ENCODE measurements at regions of chr21 and their contacts with region 1.

Region 1: GRCh38 chr21:32257962-32258785 is 20.7 kb downstream of the MIS18A start:
- DNase-seq: peak; percentile 81
- H3K4me3 ChIP-seq: peak overlapping the region in 1 of 2 experiments; percentile 36; a peak in 1 of 4 replicates
- H3K27ac ChIP-seq: peak overlapping the region; percentile 79 to 92; a peak in 3 of 4 replicates
- H3K4me1 ChIP-seq: peaks cover 11 to 27% of the 10 kb centered on the region in 2 experiments
- H3K27me3 ChIP-seq: no peaks in the 10 kb centered on the region
- CTCF ChIP-seq: peak; percentile 87
- EP300 ChIP-seq: 0 out of 4 replicates have a peak, but pooled peaks of 1 of the 2 experiments have one; percentile 11
- RAD21 ChIP-seq: peak; percentile 98

Region 2: GRCh38 chr21:31786164-31786920 is 471.8 kb before region 1 on chr21:
- CTCF ChIA-PET with region 1: interaction called, 46 read pairs
- POLR2A ChIA-PET with region 1: no interaction called
- DNase-seq: no peak
- H3K4me3 ChIP-seq: peak overlapping the region in 1 of 2 experiments; percentile 32; a peak in 1 of 4 replicates
- H3K27ac ChIP-seq: no peak overlapping the region
- H3K4me1 ChIP-seq: no peaks in the 10 kb centered on the region; a peak in 1 of 4 replicates
- H3K27me3 ChIP-seq: no peaks in the 10 kb centered on the region
- CTCF ChIP-seq: no peak; the same call in 1 of the 2 replicates
- EP300 ChIP-seq: no peak
- RAD21 ChIP-seq: no peak

Region 3: GRCh38 chr21:31873696-31874599 is 384.2 kb before region 1 on chr21:
- CTCF ChIA-PET with region 1: interaction called, 75 read pairs
- POLR2A ChIA-PET with region 1: interaction called, 8 read pairs
- DNase-seq: peak; percentile 91
- H3K4me3 ChIP-seq: peak overlapping the region; percentile 55 to 75; a peak in 3 of 4 replicates
- H3K27ac ChIP-seq: peak overlapping the region in 1 of 2 experiments; percentile 34; a peak in 1 of 4 replicates
- H3K4me1 ChIP-seq: peaks cover 0 to 20% of the 10 kb centered on the region in 2 experiments; a peak in 1 of 4 replicates
- H3K27me3 ChIP-seq: peaks cover 5% of the 10 kb centered on the region
- CTCF ChIP-seq: peak; percentile 61
- EP300 ChIP-seq: no peak
- RAD21 ChIP-seq: peak; percentile 39; the same call in 1 of the 2 replicates

Region 4: GRCh38 chr21:31938330-31939300 is 319.6 kb before region 1 on chr21:
- CTCF ChIA-PET with region 1: interaction called, 15 read pairs
- POLR2A ChIA-PET with region 1: no interaction called
- DNase-seq: peak; percentile 65
- H3K4me3 ChIP-seq: no peak overlapping the region
- H3K27ac ChIP-seq: 0 out of 4 replicates have a peak overlapping the region, but pooled peaks of 1 of the 2 experiments have one; percentile 5
- H3K4me1 ChIP-seq: peaks cover 0 to 13% of the 10 kb centered on the region in 2 experiments; a peak in 2 of 4 replicates
- H3K27me3 ChIP-seq: no peaks in the 10 kb centered on the region
- CTCF ChIP-seq: no peak
- EP300 ChIP-seq: no peak
- RAD21 ChIP-seq: no peak

Region 5: DNA sequence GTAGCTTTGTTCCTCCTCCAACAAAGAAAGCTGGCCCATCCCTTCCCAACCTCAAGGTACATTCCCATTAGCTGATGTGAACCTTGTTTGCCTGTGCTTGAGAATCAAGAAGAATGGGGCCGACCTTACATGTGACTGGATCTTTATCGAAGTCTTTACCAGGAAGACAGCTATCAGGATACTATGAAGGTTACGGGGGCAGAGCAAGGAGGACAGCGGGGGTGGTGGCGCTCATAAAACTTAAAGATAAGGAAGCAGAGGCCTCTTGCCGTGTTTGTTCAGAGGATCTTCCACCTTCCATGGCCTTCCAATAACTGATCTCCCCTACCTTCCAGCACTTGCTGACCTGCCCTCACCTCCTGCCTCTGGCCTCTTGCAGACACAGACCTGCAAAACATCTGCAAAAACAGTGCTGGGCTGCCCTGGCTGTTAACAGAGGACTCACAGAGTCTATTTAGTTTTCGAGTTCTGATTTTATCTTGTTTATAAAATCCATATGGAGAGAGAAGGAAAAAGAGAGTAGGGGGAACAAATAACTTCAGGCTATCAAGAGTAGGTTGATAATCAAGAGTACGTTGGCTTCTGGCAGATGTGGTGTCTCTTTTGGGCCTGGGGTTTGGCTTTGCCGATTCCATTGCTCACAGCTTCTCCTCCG is 187.4 kb before region 1 on chr21:
- CTCF ChIA-PET with region 1: interaction called, 17 read pairs
- POLR2A ChIA-PET with region 1: no interaction called
- DNase-seq: peak; percentile 77
- H3K4me3 ChIP-seq: no peak overlapping the region
- H3K27ac ChIP-seq: peak overlapping the region in 1 of 2 experiments; percentile 95; a peak in 2 of 4 replicates
- H3K4me1 ChIP-seq: peaks cover 0 to 17% of the 10 kb centered on the region in 2 experiments; a peak in 2 of 4 replicates
- H3K27me3 ChIP-seq: no peaks in the 10 kb centered on the region
- CTCF ChIP-seq: no peak
- EP300 ChIP-seq: peak in 1 of 2 experiments; percentile 94; a peak in 2 of 4 replicates
- RAD21 ChIP-seq: peak; percentile 20; the same call in 1 of the 2 replicates

Region 6: DNA sequence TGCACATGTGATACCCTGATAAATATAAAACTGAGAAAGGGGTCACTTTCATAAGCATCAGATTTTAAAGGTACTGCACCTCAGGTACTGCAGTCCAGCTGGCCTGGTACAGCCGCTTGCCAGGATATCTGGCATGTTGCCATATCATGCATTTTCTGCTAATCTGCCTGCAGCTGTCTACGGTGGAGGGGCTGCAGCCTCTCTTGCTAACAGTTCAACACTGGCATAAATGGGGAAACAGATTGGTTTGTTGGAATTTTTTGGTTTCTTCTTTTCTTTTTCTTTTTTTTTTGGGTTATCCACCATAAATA is 50.8 kb before region 1 on chr21:
- CTCF ChIA-PET with region 1: interaction called, 18 read pairs
- POLR2A ChIA-PET with region 1: no interaction called
- DNase-seq: peak; percentile 76
- H3K4me3 ChIP-seq: no peak overlapping the region
- H3K27ac ChIP-seq: peak overlapping the region in 1 of 2 experiments; percentile 92; a peak in 2 of 4 replicates
- H3K4me1 ChIP-seq: peaks cover 0 to 25% of the 10 kb centered on the region in 2 experiments; a peak in 2 of 4 replicates
- H3K27me3 ChIP-seq: no peaks in the 10 kb centered on the region
- CTCF ChIP-seq: no peak
- EP300 ChIP-seq: peak in 1 of 2 experiments; percentile 71; a peak in 2 of 4 replicates
- RAD21 ChIP-seq: peak; percentile 24; the same call in 1 of the 2 replicates